PC-9 (cell line): ENCODE measurements at regions of chr11 and their contacts with region 1.

Region 1: GRCh38 chr11:92152245-92152644 is 72.4 kb upstream of the FAT3 start:
- DNase-seq: no peak
- H3K4me3 ChIP-seq: no peak overlapping the region
- H3K27ac ChIP-seq: no peak overlapping the region
- H3K4me1 ChIP-seq: peaks cover 6% of the 10 kb centered on the region; the same call in 1 of the 2 replicates
- H3K27me3 ChIP-seq: no peaks in the 10 kb centered on the region
- CTCF ChIP-seq: no peak

Region 2: GRCh38 chr11:92216789-92217188 is 64.5 kb after region 1 on chr11:
- CTCF ChIA-PET with region 1: no interaction called
- POLR2A ChIA-PET with region 1: no interaction called
- intact Hi-C with region 1: loop called (anchors 5 kb)
- DNase-seq: peak in 1 of 2 experiments; percentile 72
- H3K4me3 ChIP-seq: no peak overlapping the region
- H3K27ac ChIP-seq: no peak overlapping the region
- H3K4me1 ChIP-seq: no peaks in the 10 kb centered on the region
- H3K27me3 ChIP-seq: no peaks in the 10 kb centered on the region
- CTCF ChIP-seq: no peak